Heart left ventricle (tissue), 16 donors: ENCODE measurements at regions of chr5 and their contacts with region 1.

Region 1: GRCh38 chr5:60649283-60649917 is 50.6 kb downstream of the DEPDC1B start:
- DNase-seq: no peak
- ATAC-seq: no peak
- H3K4me3 ChIP-seq: no peak overlapping the region
- H3K27ac ChIP-seq: no peak overlapping the region
- H3K4me1 ChIP-seq: no peaks in the 10 kb centered on the region
- H3K27me3 ChIP-seq: no peaks in the 10 kb centered on the region
- CTCF ChIP-seq: peak; percentile 26 to 60 (median 39)
- POLR2A ChIP-seq: no peak

Region 2: DNA sequence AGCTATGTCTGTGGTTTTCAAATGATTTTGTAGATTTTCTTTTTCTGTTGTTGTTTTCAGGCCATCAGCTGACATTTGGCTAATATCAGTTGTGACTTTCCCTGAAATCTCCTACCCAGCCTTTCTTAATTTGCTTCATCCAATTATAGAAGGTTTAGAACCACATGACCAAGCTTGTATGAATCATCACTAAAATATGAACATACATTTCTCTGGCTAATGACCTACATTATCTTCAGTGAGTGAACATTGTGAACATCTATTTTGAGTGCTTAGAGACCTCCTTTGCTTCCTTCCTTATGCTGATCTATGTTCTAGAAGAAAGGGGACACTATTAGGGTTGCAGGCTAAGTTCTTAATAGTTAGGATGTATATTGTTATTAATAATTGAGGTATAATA is 1534.1 kb before region 1 on chr5:
- intact Hi-C with region 1: no loop called
- DNase-seq: no peak
- ATAC-seq: peak in 1 of 4 donors; percentile 20
- H3K4me3 ChIP-seq: no peak overlapping the region
- H3K27ac ChIP-seq: no peak overlapping the region
- H3K4me1 ChIP-seq: peaks cover 0 to 26% (median 0%) of the 10 kb centered on the region in 12 donors
- H3K27me3 ChIP-seq: no peaks in the 10 kb centered on the region
- CTCF ChIP-seq: no peak
- POLR2A ChIP-seq: no peak

Region 3: DNA sequence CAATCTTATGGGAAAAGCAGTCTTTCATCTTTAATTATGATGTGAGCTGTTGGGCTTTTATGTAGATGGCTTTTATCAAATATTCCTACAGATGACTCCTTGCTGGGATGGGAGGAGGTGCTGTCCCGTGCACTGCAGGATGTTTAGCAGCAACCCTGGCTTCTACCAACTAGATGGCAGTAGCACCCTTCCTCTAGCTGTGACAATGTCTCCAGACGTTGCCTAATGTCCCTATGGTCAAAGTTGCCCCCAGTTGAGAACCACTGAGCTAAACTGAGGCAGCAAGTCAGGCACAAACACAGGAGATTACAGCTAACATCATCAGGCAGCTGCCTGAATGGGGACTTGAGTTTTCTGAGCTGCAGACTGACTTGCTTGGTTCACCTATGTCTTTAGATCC is 354.0 kb before region 1 on chr5:
- intact Hi-C with region 1: loop called in 1 of 10 experiments (anchors 10 kb)
- DNase-seq: peak in 1 of 5 donors; percentile 8
- ATAC-seq: no peak
- H3K4me3 ChIP-seq: no peak overlapping the region
- H3K27ac ChIP-seq: no peak overlapping the region
- H3K4me1 ChIP-seq: no peaks in the 10 kb centered on the region
- H3K27me3 ChIP-seq: no peaks in the 10 kb centered on the region
- CTCF ChIP-seq: peak in 11 of 12 donors; percentile 16 to 54 (median 34)
- POLR2A ChIP-seq: no peak